Calu3 (cell line): ENCODE measurements at regions of chr13 and their contacts with region 1.

Region 1: GRCh38 chr13:109786457-109787134 is at the start of gene IRS2:
- DNase-seq: peak; percentile 72
- H3K4me3 Mint-ChIP-seq: peak within 1 kb of the TSS; percentile 69
- H3K27ac Mint-ChIP-seq: no peak within 1 kb of the TSS
- H3K4me1 Mint-ChIP-seq: no peaks in the 10 kb centered on the region
- H3K27me3 Mint-ChIP-seq: no peaks in the 10 kb centered on the region
- CTCF ChIP-seq: no peak
- total RNA-seq, gene IRS2: 4.3 and 5.4 TPM in 2 replicates

Region 2: GRCh38 chr13:109869312-109870237 is 83.0 kb after region 1 on chr13:
- CTCF ChIA-PET with region 1: no interaction called
- intact Hi-C with region 1: loop called (anchors 10 kb)
- DNase-seq: no peak
- H3K4me3 Mint-ChIP-seq: no peak overlapping the region
- H3K27ac Mint-ChIP-seq: no peak overlapping the region
- H3K4me1 Mint-ChIP-seq: peaks cover 18% of the 10 kb centered on the region
- H3K27me3 Mint-ChIP-seq: no peaks in the 10 kb centered on the region
- CTCF ChIP-seq: no peak

Region 3: GRCh38 chr13:110097013-110097412 is 310.4 kb after region 1 on chr13:
- CTCF ChIA-PET with region 1: no interaction called
- intact Hi-C with region 1: loop called (anchors 5 kb)
- DNase-seq: no peak
- H3K4me3 Mint-ChIP-seq: no peak overlapping the region
- H3K27ac Mint-ChIP-seq: no peak overlapping the region
- H3K4me1 Mint-ChIP-seq: no peaks in the 10 kb centered on the region
- H3K27me3 Mint-ChIP-seq: no peaks in the 10 kb centered on the region
- CTCF ChIP-seq: no peak

Region 4: GRCh38 chr13:110108347-110109174 is 322.0 kb after region 1 on chr13:
- CTCF ChIA-PET with region 1: no interaction called
- intact Hi-C with region 1: loop called (anchors 5 kb)
- DNase-seq: peak; percentile 60
- H3K4me3 Mint-ChIP-seq: no peak overlapping the region
- H3K27ac Mint-ChIP-seq: no peak overlapping the region
- H3K4me1 Mint-ChIP-seq: peaks cover 11% of the 10 kb centered on the region
- H3K27me3 Mint-ChIP-seq: no peaks in the 10 kb centered on the region
- CTCF ChIP-seq: no peak

Region 5: GRCh38 chr13:110340812-110341444 is 554.3 kb after region 1 on chr13:
- CTCF ChIA-PET with region 1: no interaction called
- intact Hi-C with region 1: no loop called
- DNase-seq: no peak
- H3K4me3 Mint-ChIP-seq: no peak overlapping the region
- H3K27ac Mint-ChIP-seq: no peak overlapping the region
- H3K4me1 Mint-ChIP-seq: no peaks in the 10 kb centered on the region
- H3K27me3 Mint-ChIP-seq: no peaks in the 10 kb centered on the region
- CTCF ChIP-seq: no peak